ENCODE measurements at regions of chr3 and their contacts with region 1.

Region 1: DNA sequence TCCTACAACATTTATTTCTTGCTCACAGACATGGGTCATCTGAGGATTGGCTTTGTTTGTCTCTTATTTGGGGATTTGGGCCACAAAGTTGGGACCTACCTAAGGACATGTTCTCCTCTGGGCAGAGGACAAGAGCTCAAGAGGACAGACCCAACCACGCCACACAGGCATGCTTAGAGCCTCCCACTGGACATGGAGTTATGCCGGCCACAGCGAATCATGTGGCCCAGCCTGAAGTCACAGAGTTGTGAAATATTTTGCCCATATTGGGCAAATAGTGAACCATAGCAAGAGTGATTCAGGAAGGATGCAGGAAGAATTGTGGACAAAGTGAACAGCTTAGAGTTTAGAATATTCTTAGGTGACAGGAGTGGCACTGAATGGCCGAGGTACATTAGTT is 9.9 kb downstream of the TRAK1 start:
- DNase-seq: peak; percentile 28
- H3K4me3 ChIP-seq: no peak overlapping the region
- H3K27ac ChIP-seq: no peak overlapping the region
- H3K4me1 ChIP-seq: peaks cover 39% of the 10 kb centered on the region
- H3K27me3 ChIP-seq: no peaks in the 10 kb centered on the region
- CTCF ChIP-seq: no peak
- POLR2A ChIP-seq: no peak

Region 2: DNA sequence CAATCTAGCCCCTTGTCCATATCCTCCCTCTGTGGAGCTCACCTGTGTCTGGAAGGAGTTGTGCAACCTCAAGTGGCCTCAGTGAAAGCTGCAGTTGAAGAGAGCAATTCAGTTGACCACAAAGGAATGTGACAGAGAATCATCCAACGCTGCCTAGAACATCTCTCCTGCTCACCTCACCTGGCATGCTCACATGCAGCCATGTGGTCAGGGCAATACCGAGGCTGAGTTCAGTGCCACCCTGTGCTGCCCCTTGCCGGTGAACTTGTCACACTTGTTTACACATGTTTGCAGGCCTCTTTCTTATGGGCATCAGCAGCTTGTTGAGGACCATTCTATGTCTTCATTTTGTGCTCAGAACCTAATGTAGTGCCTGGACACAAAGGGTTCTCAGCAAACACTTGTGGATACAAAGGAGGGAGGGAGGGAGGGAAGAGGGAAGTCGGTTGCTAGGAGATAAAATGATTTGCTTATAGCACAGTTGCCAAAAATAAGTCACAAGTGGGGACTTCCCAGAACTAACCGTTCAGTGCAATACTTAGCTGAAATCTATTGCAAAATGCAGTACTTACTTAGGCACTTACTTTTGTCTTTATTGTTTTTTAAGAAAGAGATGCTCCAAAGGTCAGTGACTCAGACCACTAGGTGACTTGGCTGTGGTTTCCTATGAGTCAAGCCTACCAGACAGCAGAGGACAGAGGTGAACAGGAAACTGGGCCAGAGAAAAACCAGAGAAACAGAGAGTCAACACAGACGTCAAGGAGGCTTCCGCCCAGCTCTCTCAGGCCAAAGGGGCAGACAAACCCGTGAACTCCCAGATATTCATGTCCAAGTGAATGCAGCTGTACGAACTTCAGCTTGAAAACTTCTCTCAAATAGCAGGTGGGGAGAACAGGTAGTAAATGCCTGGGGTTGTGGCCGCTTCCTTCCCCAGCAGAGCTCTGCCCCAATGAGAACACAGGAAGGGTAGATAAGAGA is 1129.6 kb before region 1 on chr3:
- CTCF ChIA-PET with region 1: no interaction called
- POLR2A ChIA-PET with region 1: no interaction called
- dilution Hi-C with region 1: no loop called
- intact Hi-C with region 1: loop called (anchors 10 kb)
- DNase-seq: peak; percentile 99
- H3K4me3 ChIP-seq: no peak overlapping the region
- H3K27ac ChIP-seq: peak overlapping the region; percentile 91
- H3K4me1 ChIP-seq: peaks cover 57% of the 10 kb centered on the region
- H3K27me3 ChIP-seq: no peaks in the 10 kb centered on the region
- CTCF ChIP-seq: no peak
- POLR2A ChIP-seq: peak; percentile 31

Region 3: DNA sequence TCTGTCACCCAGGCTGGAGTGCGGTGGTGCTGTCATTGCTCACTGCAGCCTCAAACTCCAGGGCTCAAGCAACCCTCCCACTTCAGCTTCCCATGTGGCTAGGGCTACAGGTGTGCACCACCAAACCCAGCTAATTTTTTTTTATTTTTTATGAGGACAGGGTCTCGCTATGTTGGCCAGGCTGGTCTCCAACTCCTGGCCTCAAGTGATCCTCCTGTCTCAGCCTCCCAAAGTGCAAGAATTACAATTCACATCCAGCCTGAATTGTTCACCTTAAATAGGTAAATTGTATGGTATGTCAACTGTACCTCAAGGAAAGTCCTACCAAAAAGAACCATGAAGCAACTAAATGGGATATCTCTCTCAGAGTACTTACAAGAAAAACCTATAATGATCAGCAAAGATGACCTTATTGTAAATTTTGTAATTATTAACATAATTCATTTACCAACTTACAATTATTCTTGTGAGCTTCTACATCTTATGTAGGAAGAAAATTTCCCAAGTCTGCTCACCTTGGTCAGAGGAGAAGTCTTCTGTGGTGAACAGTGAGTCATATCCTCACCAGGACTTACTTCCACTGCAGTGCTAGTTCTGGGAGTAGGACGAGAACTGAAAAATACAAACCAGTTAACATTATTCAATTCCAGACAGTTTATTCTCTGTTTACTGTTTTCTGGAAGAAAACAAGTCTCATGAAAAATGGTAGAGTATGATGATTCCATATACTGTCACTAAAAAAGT is 193.5 kb before region 1 on chr3:
- CTCF ChIA-PET with region 1: interaction called, 15 read pairs
- POLR2A ChIA-PET with region 1: no interaction called
- dilution Hi-C with region 1: no loop called
- intact Hi-C with region 1: no loop called
- DNase-seq: peak; percentile 33
- H3K4me3 ChIP-seq: no peak overlapping the region
- H3K27ac ChIP-seq: no peak overlapping the region
- H3K4me1 ChIP-seq: no peaks in the 10 kb centered on the region
- H3K27me3 ChIP-seq: no peaks in the 10 kb centered on the region
- CTCF ChIP-seq: no peak
- POLR2A ChIP-seq: no peak

Region 4: DNA sequence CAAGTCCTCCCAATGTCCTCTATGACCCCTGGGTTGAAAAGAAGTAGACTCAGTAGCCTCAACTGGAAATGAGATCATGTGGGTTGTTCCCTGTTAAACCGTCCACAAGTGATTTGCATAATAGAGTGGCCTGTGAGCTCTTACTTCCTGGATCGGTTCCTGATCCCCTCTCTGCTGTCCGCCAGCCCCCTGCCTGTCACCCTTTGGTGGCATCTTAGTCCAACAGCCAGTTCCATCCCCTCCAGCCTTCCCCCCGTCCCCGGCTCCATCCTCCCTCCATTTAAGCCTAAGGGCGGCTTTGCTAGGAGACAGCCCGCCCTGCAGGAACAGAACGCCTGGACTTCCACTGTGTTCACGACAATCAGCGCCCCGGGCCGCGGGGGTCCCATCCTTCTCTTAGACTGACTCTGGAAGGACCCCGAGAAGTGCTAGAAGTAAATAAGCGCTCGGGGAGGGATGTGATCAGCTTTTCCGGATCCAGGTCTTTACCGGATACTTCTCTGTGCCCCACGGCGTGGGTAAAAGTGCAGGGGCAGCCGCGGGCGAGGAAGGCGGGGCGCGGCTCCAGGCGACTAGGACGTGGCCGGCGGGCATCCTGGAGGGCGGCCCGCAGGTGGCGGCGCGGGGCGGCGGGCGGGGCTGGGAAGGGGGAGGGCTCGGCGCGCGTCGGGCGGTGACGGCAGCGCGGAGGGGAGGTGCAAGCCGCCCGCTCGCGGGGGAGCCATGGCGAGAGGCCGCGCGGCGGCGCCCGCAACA is 87.9 kb before region 1 on chr3:
- CTCF ChIA-PET with region 1: interaction called, 56 read pairs
- POLR2A ChIA-PET with region 1: no interaction called
- dilution Hi-C with region 1: no loop called
- intact Hi-C with region 1: loop called (anchors 1 kb)
- DNase-seq: peak; percentile 72
- H3K4me3 ChIP-seq: peak overlapping the region; percentile 25 to 86 (median 56)
- H3K27ac ChIP-seq: no peak overlapping the region
- H3K4me1 ChIP-seq: peaks cover 13% of the 10 kb centered on the region
- H3K27me3 ChIP-seq: no peaks in the 10 kb centered on the region
- CTCF ChIP-seq: no peak
- POLR2A ChIP-seq: no peak

Region 5: DNA sequence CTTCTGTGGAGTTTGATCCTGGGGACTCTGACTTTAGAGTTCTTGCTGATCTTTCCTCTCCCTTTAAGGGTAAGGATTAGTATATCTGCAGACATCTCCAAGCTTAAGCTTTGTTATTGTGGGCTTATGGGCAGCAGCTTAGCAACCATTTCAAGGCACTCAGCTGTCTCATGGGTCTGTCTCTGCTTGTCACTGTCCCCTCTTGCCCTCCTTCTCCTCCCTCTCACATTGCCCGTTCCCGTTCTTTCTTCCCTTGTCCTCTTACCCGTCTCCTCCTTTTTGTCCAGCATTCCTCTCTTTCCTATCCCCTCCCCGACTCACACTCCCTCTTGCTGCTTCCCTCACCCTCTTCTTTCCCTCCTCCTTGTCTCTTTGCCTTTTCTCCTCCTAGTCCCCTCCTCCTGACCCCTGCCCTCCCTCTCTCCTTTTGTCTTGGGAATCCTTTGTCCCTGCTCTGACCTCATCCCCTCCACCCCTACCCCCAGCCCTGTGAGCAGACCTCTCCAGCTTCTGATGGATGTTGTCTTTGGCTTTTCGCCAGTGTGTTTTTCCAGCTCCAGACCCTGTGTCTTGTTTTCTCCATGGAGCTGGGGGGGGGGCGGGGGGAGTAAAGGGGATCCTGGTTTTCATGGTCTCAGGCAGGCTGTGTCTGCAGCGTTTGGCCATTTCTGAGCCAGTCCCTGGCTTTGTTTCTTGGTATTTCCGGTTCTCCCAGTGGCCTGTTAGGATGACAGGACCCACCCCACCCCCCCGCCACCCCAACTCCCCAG is 57.8 kb before region 1 on chr3:
- CTCF ChIA-PET with region 1: interaction called, 31 read pairs
- POLR2A ChIA-PET with region 1: no interaction called
- dilution Hi-C with region 1: no loop called
- intact Hi-C with region 1: loop called (anchors 1 kb)
- DNase-seq: peak; percentile 98
- H3K4me3 ChIP-seq: no peak overlapping the region
- H3K27ac ChIP-seq: peak overlapping the region; percentile 91
- H3K4me1 ChIP-seq: peaks cover 35% of the 10 kb centered on the region
- H3K27me3 ChIP-seq: no peaks in the 10 kb centered on the region
- CTCF ChIP-seq: no peak
- POLR2A ChIP-seq: peak; percentile 32

Region 6: DNA sequence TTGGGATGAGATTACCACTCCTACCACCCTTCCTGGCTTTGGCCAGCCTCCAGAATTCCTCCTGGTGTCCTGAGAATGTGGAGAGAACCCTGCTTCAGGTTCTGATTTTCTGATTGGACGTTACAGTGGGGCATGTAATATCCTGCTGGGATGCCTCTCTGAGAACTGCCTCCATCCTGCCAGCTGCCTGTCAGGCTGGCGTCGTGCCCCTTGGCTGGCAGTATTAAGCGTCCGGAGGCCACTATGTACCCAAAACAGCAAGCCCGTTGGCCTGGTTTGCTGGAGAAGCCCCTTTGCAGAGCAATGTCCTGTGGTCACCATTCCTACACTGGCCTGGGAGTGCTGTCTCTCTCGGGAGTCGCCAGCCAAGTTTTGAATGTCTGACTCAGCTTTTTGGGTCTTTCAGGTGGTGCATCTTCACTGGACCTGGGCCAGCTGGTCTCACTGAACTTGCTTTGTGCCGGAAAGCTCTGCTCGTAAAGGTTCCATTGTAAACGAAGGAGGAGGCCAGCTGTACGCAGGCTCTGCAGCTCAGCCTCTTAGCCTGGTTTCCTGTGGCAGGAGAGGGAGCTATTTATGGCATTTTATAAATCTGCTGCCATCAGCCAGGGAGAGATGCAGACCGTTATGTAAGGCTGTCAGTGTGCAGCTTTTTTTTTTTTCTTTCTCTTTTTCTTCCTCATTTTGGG is 29.0 kb before region 1 on chr3:
- CTCF ChIA-PET with region 1: interaction called, 36 read pairs
- POLR2A ChIA-PET with region 1: interaction called, 3 read pairs
- dilution Hi-C with region 1: no loop called
- intact Hi-C with region 1: loop called (anchors 1 kb)
- DNase-seq: peak; percentile 98
- H3K4me3 ChIP-seq: peak overlapping the region in 1 of 3 experiments; percentile 20
- H3K27ac ChIP-seq: peak overlapping the region; percentile 67
- H3K4me1 ChIP-seq: peaks cover 26% of the 10 kb centered on the region
- H3K27me3 ChIP-seq: no peaks in the 10 kb centered on the region
- CTCF ChIP-seq: no peak
- POLR2A ChIP-seq: no peak

Region 7: DNA sequence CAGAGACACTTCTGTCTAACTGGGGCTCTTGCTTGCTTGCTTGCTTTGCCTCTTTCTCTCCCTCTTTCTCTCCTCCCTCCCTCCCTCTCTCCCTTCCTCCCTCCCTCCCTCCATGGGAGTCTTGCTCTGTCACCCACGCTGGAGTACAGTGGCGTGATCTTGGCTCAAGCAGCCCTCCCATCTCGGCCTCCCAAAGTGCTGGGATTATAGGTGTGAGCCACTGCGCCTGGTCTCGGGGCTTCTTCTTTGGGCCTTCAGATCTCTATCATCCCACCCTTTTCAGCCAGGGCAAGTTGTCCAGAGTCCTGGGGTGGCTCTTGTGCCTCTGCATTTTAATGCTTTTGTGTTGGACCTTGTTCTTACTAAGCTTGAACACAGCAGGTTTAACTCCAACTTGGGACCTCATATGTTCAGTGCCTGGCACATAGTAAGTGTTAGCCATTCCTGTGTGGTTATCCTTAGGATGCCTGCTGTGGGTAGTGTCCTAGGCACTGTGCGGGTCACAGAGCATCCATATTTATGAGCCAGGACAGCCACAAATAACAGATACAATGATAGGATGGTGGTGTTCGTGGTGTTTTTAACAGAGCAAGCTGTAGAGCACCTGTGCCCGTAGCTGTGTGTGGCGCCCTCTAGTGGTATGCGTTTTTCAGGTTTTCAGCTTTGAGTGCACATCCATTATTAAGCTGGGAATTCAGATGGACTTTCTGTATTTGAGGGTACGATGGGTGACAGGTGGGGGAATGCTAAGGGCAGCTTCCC is 89.8 kb after region 1 on chr3:
- CTCF ChIA-PET with region 1: interaction called, 54 read pairs
- POLR2A ChIA-PET with region 1: no interaction called
- dilution Hi-C with region 1: no loop called
- intact Hi-C with region 1: no loop called
- DNase-seq: peak; percentile 77
- H3K4me3 ChIP-seq: no peak overlapping the region
- H3K27ac ChIP-seq: no peak overlapping the region
- H3K4me1 ChIP-seq: peaks cover 11% of the 10 kb centered on the region
- H3K27me3 ChIP-seq: no peaks in the 10 kb centered on the region
- CTCF ChIP-seq: peak; percentile 74 to 83
- POLR2A ChIP-seq: no peak

Measured in endothelial cell of umbilical vein (primary cell).